Activated naive CD8-positive, alpha-beta T cell treated with anti-CD3 and anti-CD28 coated beads, Interleukin-2, amount 10 ng/mL, durations not matched to agents 7 days and 5 days (primary cell): ENCODE measurements at regions of chr1 and their contacts with region 1.

Region 1: GRCh38 chr1:2300851-2301606 is 72.9 kb downstream of the SKI start:
- DNase-seq: peak; percentile 83
- ATAC-seq: peak; percentile 71
- H3K4me3 Mint-ChIP-seq: peak overlapping the region; percentile 76
- H3K27ac Mint-ChIP-seq: peak overlapping the region; percentile 96
- H3K4me1 Mint-ChIP-seq: peaks cover 25% of the 10 kb centered on the region
- H3K27me3 Mint-ChIP-seq: no peaks in the 10 kb centered on the region

Region 2: DNA sequence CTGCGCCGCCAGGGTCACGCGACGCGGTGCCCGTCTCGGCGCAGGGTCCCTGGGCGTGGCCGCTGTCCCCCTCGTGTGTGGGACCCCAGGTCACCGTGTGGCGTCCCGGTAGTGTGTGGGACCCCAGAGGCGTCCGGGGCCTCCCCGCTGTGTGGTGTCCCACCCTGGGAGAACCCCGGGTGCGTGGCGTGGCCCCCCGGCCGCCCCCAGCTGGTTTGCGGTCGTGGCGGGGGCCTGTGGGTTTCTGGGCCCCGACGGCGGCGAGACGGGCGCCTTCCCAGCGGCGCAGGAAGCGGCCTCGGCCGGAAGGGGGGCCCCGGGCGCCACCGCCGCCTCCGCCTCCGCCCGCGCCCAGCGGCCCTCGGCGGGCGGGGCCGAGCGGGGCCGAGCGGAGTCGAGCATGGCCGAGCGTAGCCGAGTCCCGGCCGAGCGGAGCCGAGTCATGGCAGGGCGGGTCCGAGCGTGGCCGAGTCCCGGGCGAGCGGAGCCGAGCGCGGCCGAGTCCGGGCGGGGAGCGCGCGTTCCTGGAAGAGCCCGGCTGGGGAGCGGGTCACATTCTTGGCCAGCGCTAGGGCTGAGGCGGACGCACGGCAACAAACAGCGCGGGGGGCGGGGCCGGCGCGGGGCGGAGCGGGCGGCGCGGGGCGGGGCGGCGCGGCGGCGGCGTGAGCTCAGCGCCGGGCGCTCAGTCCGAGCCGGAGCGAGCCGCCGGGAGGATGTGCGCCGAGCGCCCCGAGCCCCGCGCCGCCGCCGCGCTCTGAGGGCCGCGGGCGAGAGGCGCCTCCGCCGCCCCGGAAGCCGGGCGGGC is 73.5 kb before region 1 on chr1:
- POLR2A ChIA-PET with region 1: interaction called, 34 read pairs
- DNase-seq: peak; percentile 99
- ATAC-seq: peak; percentile 86
- H3K4me3 Mint-ChIP-seq: peak overlapping the region; percentile 66
- H3K27ac Mint-ChIP-seq: peak overlapping the region; percentile 65
- H3K4me1 Mint-ChIP-seq: peaks cover 15% of the 10 kb centered on the region
- H3K27me3 Mint-ChIP-seq: peaks cover 11% of the 10 kb centered on the region

Region 3: DNA sequence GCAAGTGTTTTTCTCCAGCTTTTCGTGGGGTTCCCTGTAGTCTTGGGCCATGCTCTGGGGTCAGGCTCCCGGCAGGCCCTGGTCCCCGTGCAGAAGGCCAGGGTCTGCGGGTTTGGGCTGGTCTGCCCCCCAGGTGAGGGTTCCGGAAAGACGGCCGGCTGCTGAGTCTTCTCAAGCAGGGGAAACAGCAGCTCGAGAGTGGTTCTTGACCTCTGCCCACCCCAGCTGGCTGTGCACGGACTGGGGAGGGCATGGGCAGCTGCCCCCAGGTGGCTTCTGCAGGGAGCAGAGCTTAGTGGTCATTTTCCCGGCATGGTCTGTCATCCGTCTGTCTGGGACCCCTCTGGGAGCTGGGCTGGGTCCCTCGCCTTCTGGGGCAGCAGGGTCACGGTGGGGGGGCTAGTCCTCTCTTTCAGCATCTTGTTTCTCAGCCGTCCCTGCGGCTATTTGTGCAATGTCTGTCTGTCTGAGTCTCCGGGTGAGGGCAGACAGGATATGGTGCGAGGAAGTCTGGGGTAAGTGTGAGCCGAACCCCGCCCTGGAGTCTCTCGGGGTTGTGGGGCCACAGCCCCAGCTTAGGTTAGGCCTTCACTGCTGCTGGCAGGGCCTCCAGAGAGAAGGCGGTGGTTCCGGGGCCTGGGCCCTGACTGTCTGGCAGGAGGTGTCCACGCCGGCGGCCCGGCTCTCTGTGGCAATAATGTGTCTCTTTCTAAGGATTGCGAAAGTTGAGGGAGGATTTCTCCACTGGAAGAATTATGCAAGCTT is 66.8 kb before region 1 on chr1:
- POLR2A ChIA-PET with region 1: interaction called, 34 read pairs
- DNase-seq: peak; percentile 74
- ATAC-seq: peak; percentile 81
- H3K4me3 Mint-ChIP-seq: peak overlapping the region; percentile 83
- H3K27ac Mint-ChIP-seq: peak overlapping the region; percentile 88
- H3K4me1 Mint-ChIP-seq: peaks cover 55% of the 10 kb centered on the region
- H3K27me3 Mint-ChIP-seq: no peaks in the 10 kb centered on the region

Region 4: DNA sequence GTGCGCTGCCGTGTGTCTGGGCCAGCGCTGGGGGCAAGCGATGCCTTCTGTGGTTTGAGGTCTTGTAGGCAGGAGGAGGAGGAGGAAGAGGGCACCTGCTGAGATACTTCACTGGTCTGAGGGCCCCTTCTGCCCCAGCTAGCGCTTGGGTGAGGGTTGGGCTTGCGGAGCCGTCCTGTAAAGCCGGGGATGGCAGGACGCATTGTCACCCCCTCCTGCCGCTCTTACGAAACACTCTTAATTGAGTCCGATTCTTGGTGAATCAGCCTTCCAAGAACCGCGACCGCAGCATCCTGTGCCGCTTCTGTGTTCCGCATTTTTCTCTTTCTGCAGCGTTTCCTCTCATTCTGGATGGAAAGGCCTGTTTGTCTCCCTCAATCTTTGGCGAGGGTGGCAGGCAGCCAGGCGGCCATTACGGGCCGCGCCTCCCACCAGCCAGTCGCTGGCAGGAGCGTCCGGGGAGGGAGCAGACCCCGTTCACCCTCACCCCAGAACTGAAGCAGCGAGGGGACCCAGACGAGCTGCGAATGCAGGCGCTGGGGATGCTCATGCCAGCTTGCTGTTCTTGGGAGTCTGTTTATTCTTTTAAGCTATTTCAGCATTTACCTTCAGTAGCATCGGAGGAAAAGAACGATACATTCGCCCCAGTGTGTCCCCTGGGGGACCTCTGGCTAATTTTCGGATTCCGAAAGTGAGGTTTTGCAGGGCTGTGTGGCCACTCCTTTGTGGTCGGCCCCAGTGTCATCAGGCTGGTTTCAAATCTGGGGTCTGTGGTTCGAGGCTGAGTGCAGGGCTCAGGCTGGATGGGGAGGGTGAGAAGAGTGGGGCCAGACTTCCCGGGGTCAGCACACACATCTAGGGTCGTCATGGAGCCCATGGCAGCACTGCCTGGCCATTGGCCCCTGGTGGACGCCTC is 10.2 kb before region 1 on chr1:
- POLR2A ChIA-PET with region 1: interaction called, 36 read pairs
- DNase-seq: peak; percentile 81
- ATAC-seq: peak; percentile 80
- H3K4me3 Mint-ChIP-seq: peak overlapping the region; percentile 81
- H3K27ac Mint-ChIP-seq: peak overlapping the region; percentile 95
- H3K4me1 Mint-ChIP-seq: peaks cover 53% of the 10 kb centered on the region
- H3K27me3 Mint-ChIP-seq: no peaks in the 10 kb centered on the region

Region 5: GRCh38 chr1:2314803-2315673 is 14.0 kb after region 1 on chr1:
- POLR2A ChIA-PET with region 1: interaction called, 23 read pairs
- DNase-seq: peak; percentile 82
- ATAC-seq: peak; percentile 46
- H3K4me3 Mint-ChIP-seq: peak overlapping the region; percentile 68
- H3K27ac Mint-ChIP-seq: peak overlapping the region; percentile 74
- H3K4me1 Mint-ChIP-seq: peaks cover 2% of the 10 kb centered on the region
- H3K27me3 Mint-ChIP-seq: no peaks in the 10 kb centered on the region